CD4-positive, alpha-beta T cell (primary cell): ENCODE measurements at regions of chr17 and their contacts with region 1.

Region 1: DNA sequence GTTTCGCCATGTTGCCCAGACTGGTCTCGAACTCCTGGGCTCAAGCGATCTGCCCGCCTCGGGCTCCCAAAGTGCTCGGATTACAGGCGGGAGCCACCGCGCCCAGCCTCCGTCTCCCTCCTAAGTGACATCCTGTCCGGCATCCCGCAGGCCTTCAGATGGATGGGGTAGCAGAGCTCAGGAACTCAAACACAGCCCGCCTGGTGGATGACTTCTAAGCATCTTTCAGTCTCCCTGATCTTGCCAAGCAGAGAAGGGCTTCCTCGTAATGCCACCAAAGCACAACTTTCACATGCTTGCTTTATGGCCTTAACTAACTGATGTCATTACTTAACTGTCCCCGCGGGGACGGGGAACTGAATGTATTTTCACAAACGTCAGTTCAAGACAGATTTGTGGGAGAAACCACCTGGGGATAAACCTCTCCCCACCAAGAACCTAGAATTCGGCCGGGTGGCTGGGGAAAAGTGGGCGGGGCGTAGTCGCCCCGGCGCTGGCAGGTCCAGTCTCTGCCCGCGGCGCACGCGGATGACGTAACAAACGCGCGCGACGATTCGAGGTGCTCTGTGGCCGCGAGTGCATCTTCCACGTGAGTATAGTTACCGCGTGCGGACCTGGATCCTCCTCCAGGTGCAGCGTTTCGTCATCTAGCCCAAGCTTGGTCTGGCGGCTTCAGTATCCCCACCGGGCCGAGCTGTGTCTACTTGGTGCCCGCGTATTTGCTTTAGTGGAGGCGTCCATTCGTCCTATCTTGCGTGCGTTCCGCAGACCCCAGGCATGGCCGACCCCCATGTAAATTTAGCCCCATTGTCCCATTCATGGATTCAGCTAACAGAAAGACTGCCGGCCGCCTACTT is at the start of gene PFAS:
- DNase-seq: peak; percentile 87 to 98 (median 94)
- ATAC-seq: peak; percentile 35
- H3K4me3 ChIP-seq: peak within 1 kb of the TSS; percentile 75
- H3K4me3 Mint-ChIP-seq: peak within 1 kb of the TSS; percentile 98
- H3K27ac ChIP-seq: peak within 1 kb of the TSS; percentile 99 to 100
- H3K27ac Mint-ChIP-seq: peak within 1 kb of the TSS; percentile 100
- H3K4me1 ChIP-seq: peaks cover 53% of the 10 kb centered on the region
- H3K4me1 Mint-ChIP-seq: peaks cover 62% of the 10 kb centered on the region
- H3K27me3 ChIP-seq: no peaks in the 10 kb centered on the region
- H3K27me3 Mint-ChIP-seq: peaks cover 5% of the 10 kb centered on the region
- CTCF ChIP-seq: no peak
- total RNA-seq, gene PFAS: 22.3 to 23.0 TPM

Region 2: DNA sequence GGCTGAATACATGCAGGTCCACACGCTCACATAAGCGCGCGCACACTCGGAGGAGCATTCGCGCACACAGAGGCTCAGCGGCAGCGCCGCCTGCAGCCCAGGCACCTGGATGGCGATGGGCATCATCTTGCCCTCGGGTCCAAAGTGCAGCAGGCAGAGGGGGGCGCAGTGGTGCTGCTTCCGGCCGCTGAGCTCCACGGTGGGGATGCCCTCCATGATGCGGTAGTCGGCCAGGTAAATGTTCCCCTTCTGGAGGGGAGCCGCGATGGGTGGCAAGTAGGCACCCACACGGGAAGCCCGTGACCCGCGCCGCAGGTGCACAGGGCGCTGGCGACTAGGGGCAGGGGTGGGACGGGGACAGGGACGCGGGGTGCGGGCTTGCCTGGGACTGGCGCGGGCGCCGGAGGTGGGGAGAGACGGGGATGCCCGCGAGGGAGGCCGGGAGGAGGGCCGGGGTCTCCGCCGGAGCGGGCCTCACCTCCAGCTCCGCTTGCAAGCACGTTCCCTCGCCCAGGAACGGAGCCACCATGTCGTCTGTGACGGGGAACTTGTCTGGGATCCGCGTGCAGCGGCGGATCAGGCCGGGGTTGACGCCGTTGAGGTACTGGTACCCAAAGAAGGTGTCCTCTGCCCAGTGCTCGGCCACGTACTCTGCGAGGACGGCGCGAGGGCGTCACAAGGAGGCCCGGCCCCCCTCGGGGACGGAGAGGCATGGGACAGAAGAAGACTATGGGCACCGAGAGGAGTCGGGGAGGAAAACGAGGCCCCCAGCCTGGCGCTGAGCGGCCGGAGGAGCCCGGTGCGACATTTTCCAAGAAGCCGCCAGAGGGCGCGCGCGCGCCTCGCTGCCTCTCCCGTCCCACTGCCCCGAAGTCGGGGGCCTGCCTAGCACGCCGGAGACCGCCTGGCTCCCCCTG is 169.4 kb before region 1 on chr17:
- CTCF ChIA-PET with region 1: no interaction called
- POLR2A ChIA-PET with region 1: interaction called, 17 read pairs
- intact Hi-C with region 1: no loop called
- DNase-seq: peak; percentile 66 to 92 (median 76)
- ATAC-seq: peak; percentile 80
- H3K4me3 ChIP-seq: peak overlapping the region; percentile 77
- H3K4me3 Mint-ChIP-seq: peak overlapping the region; percentile 92
- H3K27ac ChIP-seq: peak overlapping the region; percentile 52 to 70
- H3K27ac Mint-ChIP-seq: peak overlapping the region; percentile 76
- H3K4me1 ChIP-seq: peaks cover 20% of the 10 kb centered on the region
- H3K4me1 Mint-ChIP-seq: peaks cover 17% of the 10 kb centered on the region
- H3K27me3 ChIP-seq: peaks cover 4 to 6% of the 10 kb centered on the region in 2 experiments
- H3K27me3 Mint-ChIP-seq: peaks cover 7% of the 10 kb centered on the region
- CTCF ChIP-seq: peak; percentile 82

Region 3: GRCh38 chr17:8151123-8151640 is 97.8 kb before region 1 on chr17:
- CTCF ChIA-PET with region 1: no interaction called
- POLR2A ChIA-PET with region 1: interaction called, 63 read pairs
- intact Hi-C with region 1: loop called in 1 of 2 experiments (anchors 5 kb)
- DNase-seq: peak; percentile 82 to 96 (median 90)
- ATAC-seq: peak; percentile 43
- H3K4me3 ChIP-seq: peak overlapping the region; percentile 75
- H3K4me3 Mint-ChIP-seq: peak overlapping the region; percentile 95
- H3K27ac ChIP-seq: peak overlapping the region; percentile 99 to 100
- H3K27ac Mint-ChIP-seq: no peak overlapping the region
- H3K4me1 ChIP-seq: peaks cover 85% of the 10 kb centered on the region
- H3K4me1 Mint-ChIP-seq: peaks cover 51% of the 10 kb centered on the region
- H3K27me3 ChIP-seq: no peaks in the 10 kb centered on the region
- H3K27me3 Mint-ChIP-seq: peaks cover 4% of the 10 kb centered on the region
- CTCF ChIP-seq: no peak

Region 4: DNA sequence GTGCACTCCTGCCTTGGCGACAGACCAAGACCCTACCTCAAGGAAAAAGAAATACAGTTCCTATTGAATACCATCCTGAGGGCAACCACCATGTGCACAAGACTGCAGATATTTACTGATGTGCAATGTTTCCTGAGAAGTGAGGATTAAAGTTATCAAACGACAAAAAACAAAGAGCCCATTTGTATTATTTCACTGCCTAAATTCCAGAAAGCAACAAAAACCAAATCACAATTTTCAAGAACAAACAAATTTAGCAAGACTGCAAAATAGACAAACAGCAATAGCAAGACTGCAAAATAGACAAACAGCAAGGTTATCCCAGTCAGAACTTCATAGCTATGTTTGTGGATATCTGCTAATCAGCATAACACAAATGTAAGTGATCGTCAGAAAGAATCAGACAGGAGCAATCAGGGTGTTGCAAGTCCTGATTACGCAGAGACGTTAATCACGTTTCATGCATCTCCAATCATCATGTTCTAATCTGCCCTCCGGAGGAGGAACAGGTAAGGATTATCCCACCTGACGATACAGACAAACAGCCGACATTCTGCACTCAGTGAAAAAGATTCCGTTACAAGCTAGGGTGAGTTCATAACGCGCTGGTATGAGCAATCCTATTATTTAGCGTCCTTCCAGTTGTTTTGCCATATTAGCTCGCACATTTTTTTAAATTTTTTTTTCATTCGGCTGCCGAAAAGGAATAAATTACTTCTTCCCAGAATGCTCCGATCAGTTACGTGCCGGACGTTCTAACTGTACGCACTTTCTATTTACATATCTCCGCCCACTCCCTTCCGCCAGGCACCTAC is 75.7 kb before region 1 on chr17:
- CTCF ChIA-PET with region 1: interaction called, 4 read pairs
- POLR2A ChIA-PET with region 1: interaction called, 61 read pairs
- intact Hi-C with region 1: loop called in 1 of 2 experiments (anchors 5 kb)
- DNase-seq: peak in 13 of 14 experiments; percentile 56 to 95 (median 70)
- ATAC-seq: peak; percentile 81
- H3K4me3 ChIP-seq: peak overlapping the region; percentile 49
- H3K4me3 Mint-ChIP-seq: peak overlapping the region; percentile 90
- H3K27ac ChIP-seq: peak overlapping the region; percentile 95 to 98
- H3K27ac Mint-ChIP-seq: peak overlapping the region; percentile 99
- H3K4me1 ChIP-seq: peaks cover 48% of the 10 kb centered on the region
- H3K4me1 Mint-ChIP-seq: peaks cover 51% of the 10 kb centered on the region
- H3K27me3 ChIP-seq: no peaks in the 10 kb centered on the region
- H3K27me3 Mint-ChIP-seq: no peaks in the 10 kb centered on the region
- CTCF ChIP-seq: no peak

Region 5: GRCh38 chr17:8283356-8283755 is 34.4 kb after region 1 on chr17:
- CTCF ChIA-PET with region 1: interaction called, 3 read pairs
- POLR2A ChIA-PET with region 1: interaction called, 51 read pairs
- intact Hi-C with region 1: loop called in 1 of 2 experiments (anchors 1 kb)
- DNase-seq: peak in 1 of 14 experiments; percentile 30
- ATAC-seq: no peak
- H3K4me3 ChIP-seq: no peak overlapping the region
- H3K4me3 Mint-ChIP-seq: no peak overlapping the region
- H3K27ac ChIP-seq: peak overlapping the region in 1 of 2 donors; percentile 9
- H3K27ac Mint-ChIP-seq: peak overlapping the region; percentile 33
- H3K4me1 ChIP-seq: peaks cover 32% of the 10 kb centered on the region
- H3K4me1 Mint-ChIP-seq: peaks cover 19% of the 10 kb centered on the region
- H3K27me3 ChIP-seq: no peaks in the 10 kb centered on the region
- H3K27me3 Mint-ChIP-seq: no peaks in the 10 kb centered on the region
- CTCF ChIP-seq: no peak

Region 6: DNA sequence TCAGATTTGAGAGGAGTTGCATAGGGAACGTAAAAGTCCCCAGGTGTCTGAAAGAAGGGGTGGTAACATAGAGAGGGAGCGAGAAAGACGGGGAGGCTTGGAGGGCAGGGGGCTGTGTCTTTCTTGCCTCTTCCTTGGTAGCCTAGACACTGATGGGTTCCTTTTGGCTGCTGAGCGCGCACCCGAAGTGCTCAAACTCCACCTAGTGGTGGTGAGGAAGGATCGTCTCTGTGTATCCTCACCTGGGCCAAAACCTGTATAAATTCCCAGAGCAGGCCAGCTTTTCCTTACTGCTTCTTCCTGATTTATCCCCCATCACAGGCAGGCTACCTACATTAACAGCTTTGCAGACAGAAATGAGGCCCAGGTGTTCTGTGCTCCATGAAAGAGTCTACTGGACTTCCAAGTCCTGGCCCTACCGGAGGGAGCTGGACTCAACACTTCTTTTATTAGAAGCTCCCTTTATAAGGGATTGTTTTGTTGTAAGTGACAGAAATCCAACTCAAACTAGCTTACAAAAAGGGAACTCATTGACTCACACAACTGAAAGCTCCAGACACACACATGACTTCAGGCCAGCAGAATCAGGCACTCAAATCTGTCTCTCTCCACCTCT is 51.8 kb after region 1 on chr17:
- CTCF ChIA-PET with region 1: interaction called, 13 read pairs
- POLR2A ChIA-PET with region 1: interaction called, 117 read pairs
- intact Hi-C with region 1: loop called (anchors 1 to 2 kb)
- DNase-seq: peak; percentile 39 to 87 (median 58)
- ATAC-seq: peak; percentile 96
- H3K4me3 ChIP-seq: no peak overlapping the region
- H3K4me3 Mint-ChIP-seq: peak overlapping the region; percentile 49
- H3K27ac ChIP-seq: no peak overlapping the region
- H3K27ac Mint-ChIP-seq: peak overlapping the region; percentile 8
- H3K4me1 ChIP-seq: peaks cover 10% of the 10 kb centered on the region
- H3K4me1 Mint-ChIP-seq: peaks cover 13% of the 10 kb centered on the region
- H3K27me3 ChIP-seq: no peaks in the 10 kb centered on the region
- H3K27me3 Mint-ChIP-seq: no peaks in the 10 kb centered on the region
- CTCF ChIP-seq: peak; percentile 81

Region 7: DNA sequence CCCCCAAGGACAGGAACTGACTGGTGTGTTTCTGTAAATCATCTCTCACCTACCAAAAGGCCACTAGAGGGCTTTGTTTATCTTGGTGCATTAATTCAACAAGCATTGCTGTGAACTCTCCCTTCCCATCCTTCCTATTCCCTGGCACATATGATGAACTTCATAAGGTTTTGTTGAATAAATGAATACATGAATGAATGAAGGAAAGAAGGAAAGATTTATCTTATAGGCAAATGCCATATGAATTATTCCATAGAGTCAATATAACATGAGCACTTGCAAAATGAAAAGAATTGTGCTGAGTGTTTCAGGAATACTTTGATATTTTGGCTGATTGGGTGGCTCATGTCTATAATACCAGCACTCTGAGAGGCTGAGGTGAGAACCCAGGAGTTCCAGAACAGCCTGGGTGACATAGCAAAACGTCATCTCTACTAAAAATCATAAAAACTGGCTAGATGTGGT is 505.0 kb after region 1 on chr17:
- CTCF ChIA-PET with region 1: no interaction called
- POLR2A ChIA-PET with region 1: no interaction called
- intact Hi-C with region 1: no loop called
- DNase-seq: peak in 2 of 14 experiments; percentile 11 to 29
- ATAC-seq: no peak
- H3K4me3 ChIP-seq: no peak overlapping the region
- H3K4me3 Mint-ChIP-seq: no peak overlapping the region
- H3K27ac ChIP-seq: no peak overlapping the region
- H3K27ac Mint-ChIP-seq: no peak overlapping the region
- H3K4me1 ChIP-seq: no peaks in the 10 kb centered on the region
- H3K4me1 Mint-ChIP-seq: no peaks in the 10 kb centered on the region
- H3K27me3 ChIP-seq: peaks cover 0 to 4% of the 10 kb centered on the region in 2 experiments
- H3K27me3 Mint-ChIP-seq: peaks cover 18% of the 10 kb centered on the region
- CTCF ChIP-seq: no peak